Right ventricle myocardium superior (tissue), 1 donor: ENCODE measurements at regions of chr1 and their contacts with region 1.

Region 1: DNA sequence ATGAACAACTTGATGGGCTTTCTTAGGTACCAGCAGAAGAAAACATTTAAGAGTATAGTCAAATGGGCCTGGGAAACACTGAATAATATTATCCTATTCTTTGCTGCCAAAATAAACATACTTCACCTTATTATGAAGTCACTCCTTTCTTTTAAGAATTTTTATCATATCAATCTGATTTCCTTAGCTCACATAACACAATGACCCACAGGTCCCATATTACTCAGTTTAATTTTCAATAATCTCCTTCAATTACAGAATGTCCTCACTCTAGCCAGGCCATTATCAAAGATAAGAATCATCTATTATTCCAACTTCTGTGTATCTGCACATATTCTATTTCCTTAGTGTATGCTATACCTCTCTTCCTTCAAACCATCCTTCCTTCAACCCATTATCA is 63.0 kb downstream of the PIGK start:
- DNase-seq: no peak
- ATAC-seq: no peak

Region 2: GRCh38 chr1:77322061-77322900 is 166.1 kb after region 1 on chr1:
- intact Hi-C with region 1: no loop called
- DNase-seq: no peak
- ATAC-seq: no peak

Region 3: DNA sequence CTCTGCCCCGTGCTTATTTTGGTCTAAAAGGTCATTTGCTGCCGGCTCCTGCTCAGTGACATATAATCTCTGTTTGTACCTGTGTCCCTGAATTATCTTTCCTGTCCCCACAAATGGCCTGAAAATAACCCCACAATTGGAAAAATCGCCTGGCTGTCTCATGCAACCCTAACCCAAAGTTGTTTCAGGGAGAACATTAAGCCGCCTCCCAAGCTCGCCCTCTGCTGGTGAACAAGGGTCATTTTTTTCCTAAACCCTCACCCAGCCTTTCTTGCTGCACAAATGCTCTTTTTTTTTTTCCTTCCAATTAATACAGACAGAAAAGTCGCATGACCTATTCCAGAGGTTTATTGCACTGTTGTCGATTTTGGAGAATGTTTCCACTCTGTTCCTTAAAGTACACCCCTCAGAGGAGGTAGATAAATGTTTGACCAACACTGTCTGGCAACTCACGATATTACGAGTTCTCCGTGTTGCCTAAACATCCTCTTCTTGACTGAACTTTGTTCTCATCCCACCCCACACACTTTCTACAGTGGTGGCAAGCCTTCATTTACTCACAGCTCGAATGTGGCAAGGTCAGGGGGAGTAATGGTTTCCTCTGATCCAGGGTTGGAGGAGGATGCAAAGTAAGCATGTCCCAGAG is 377.6 kb after region 1 on chr1:
- intact Hi-C with region 1: loop called (anchors 5 kb)
- DNase-seq: no peak
- ATAC-seq: peak; percentile 84

Region 4: DNA sequence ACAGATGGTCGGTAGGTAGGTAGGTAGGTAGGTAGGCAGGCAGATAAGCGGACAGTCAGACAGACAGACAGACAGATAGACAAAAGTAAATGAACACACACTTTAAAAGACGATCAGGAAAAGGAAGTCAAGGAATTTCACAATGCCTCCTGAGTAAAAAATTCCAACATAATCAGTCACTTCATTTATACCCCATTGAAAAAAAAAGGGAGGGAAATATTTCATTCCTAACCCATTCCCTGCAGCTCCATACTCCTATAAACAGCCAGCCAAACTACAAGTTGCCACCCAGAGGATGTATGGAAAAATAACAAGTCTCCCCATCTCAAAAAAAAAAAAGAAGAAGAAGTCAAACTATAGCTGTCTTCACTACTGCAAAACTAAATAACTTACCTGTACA is 482.8 kb after region 1 on chr1:
- intact Hi-C with region 1: no loop called
- DNase-seq: no peak
- ATAC-seq: no peak